Cardiac septum (tissue), 1 donor: ENCODE measurements at regions of chr2 and their contacts with region 1.

Region 1: GRCh38 chr2:36539631-36540030 is 58.3 kb downstream of the FEZ2 start:
- DNase-seq: no peak

Region 2: DNA sequence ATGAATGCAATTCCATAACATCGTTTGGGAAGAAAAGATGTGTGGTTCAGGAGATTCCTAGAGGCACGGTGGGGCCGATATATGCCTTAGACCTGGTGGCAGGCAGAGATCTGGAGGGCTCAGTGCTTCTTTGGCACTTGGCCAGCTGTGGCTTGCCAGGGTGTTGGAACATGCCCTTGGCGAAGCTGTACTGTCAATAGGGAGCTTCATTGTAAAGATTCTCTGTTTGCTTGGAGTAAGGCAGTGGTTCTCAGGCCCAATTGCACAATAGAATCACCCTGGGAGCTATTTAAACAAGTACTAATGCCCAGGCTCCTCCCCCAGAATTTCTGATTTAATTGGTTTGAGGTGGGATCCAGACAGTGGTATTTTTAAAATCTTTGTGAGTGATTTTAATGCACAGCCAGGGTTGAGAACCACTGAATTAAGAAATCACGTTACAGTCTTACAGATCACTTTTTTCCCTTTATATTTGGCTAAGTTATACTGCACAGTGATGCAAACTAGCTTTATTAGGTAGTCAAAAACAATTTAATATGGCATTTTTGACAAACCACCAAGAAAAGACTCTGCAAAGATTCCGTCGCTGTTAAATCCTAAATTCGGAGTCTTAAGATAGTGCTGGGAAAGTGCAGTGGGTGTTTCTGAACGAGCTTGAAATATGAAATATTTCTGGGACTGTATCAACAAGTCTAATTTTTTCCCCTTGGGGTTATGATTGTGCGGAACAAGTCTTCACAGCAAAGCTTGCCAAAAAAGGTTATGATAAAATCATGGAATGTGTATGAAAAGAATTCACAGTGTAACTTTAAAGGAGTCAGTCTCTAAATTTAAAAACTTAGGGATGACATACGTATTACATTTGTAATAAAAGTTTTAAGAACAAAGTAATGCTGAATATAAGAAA is 106.1 kb before region 1 on chr2:
- intact Hi-C with region 1: no loop called
- DNase-seq: no peak

Region 3: DNA sequence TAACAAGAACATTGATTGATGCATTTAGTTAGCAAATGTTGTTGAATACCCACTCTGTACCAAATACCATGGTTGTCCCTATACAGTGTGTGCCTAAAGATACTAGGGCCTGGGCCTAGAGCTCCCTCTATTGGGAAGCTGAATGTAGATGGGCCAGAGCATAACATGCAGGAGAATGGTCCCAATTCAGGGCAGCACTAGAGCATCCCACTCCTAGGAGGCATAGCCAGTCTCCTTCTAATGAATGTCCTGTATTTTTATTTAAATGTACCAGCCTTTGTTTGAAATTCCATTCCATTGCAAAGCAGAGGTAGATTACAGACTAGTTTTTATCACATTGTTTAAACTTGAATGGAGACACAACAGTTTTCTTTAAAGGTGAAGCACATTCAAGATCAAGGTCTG is 32.2 kb before region 1 on chr2:
- intact Hi-C with region 1: no loop called
- DNase-seq: no peak

Region 4: DNA sequence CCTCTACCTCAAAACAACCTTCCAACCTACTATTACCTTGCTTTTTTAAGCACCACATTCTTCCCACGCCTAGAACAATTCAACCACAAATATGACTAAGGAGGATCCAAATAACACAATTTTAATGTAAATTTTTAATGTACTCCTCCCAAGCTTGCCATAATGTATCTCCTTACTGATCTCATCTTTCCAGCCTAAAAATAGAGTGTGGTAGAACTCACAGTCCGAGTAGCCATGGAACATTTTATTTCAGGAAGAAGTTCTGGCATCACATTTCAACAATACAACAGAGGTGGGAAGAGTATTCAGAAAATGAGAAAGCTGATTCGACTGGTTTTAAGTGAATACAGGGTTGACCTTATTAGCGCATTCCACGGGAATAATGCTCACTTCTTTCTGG is 42.9 kb after region 1 on chr2:
- intact Hi-C with region 1: loop called (anchors 5 kb)
- DNase-seq: no peak